ENCODE measurements at regions of chr3 and their contacts with region 1.

Region 1: DNA sequence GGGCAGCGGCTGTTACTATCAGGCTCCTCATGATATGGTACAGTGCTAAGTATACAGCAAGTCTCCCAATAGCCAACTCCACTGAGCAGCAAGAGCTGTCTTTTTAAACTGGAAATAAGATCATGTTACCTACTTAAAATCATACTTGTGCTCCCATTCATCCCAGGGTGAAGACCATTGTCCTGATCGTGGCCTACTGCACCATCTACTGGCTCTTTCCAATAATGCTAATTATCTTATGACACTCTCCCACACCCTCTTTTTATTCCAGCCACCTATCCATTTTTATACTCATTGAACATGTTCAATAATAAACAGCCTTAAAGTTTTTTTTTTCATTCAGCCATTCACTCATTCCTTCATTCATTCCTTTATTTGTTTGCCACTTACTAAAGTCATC is 117.7 kb downstream of the GBE1 start:
- H3K4me3 Mint-ChIP-seq: no peak overlapping the region
- H3K27ac Mint-ChIP-seq: no peak overlapping the region
- H3K4me1 Mint-ChIP-seq: no peaks in the 10 kb centered on the region
- H3K27me3 Mint-ChIP-seq: no peaks in the 10 kb centered on the region

Region 2: GRCh38 chr3:81302045-81302444 is 341.7 kb before region 1 on chr3:
- intact Hi-C with region 1: loop called (anchors 5 kb)
- H3K4me3 Mint-ChIP-seq: no peak overlapping the region
- H3K27ac Mint-ChIP-seq: no peak overlapping the region
- H3K4me1 Mint-ChIP-seq: no peaks in the 10 kb centered on the region
- H3K27me3 Mint-ChIP-seq: peaks cover 1% of the 10 kb centered on the region

Region 3: GRCh38 chr3:81500039-81500438 is 143.7 kb before region 1 on chr3:
- intact Hi-C with region 1: loop called (anchors 10 kb)
- H3K4me3 Mint-ChIP-seq: no peak overlapping the region
- H3K27ac Mint-ChIP-seq: no peak overlapping the region
- H3K4me1 Mint-ChIP-seq: peaks cover 12% of the 10 kb centered on the region
- H3K27me3 Mint-ChIP-seq: no peaks in the 10 kb centered on the region

Measured in dendritic cell treated with granulocyte-macrophage colony-stimulating factor and Interleukin-4, amounts not matched to agents 40 ng/mL and 50 ng/mL, for 4 days (primary cell).